ENCODE measurements at regions of chr3 and their contacts with region 1.

Region 1: GRCh38 chr3:58052373-58053273 is 44.4 kb downstream of the FLNB start:
- DNase-seq: peak; percentile 83
- ATAC-seq: peak; percentile 42
- H3K4me3 ChIP-seq: peak overlapping the region in 1 of 3 experiments; percentile 20; a peak in 1 of 6 replicates
- H3K27ac ChIP-seq: peak overlapping the region; percentile 96
- H3K4me1 ChIP-seq: peaks cover 96% of the 10 kb centered on the region
- H3K27me3 ChIP-seq: no peaks in the 10 kb centered on the region
- CTCF ChIP-seq: no peak
- EP300 ChIP-seq: peak in 1 of 2 experiments; percentile 64; a peak in 1 of 4 replicates
- POLR2A ChIP-seq: no peak
- RAD21 ChIP-seq: no peak

Region 2: GRCh38 chr3:58025837-58026569 is 26.6 kb before region 1 on chr3:
- CTCF ChIA-PET with region 1: no interaction called
- POLR2A ChIA-PET with region 1: interaction called, 13 read pairs
- in situ Hi-C with region 1: no loop called
- intact Hi-C with region 1: loop called (anchors 5 kb)
- DNase-seq: peak; percentile 39
- ATAC-seq: no peak; the same call in 2 of the 3 replicates
- H3K4me3 ChIP-seq: no peak overlapping the region
- H3K27ac ChIP-seq: peak overlapping the region; percentile 24
- H3K4me1 ChIP-seq: peaks cover 90% of the 10 kb centered on the region
- H3K27me3 ChIP-seq: no peaks in the 10 kb centered on the region
- CTCF ChIP-seq: no peak
- EP300 ChIP-seq: no peak
- POLR2A ChIP-seq: no peak
- RAD21 ChIP-seq: no peak

Region 3: GRCh38 chr3:58041654-58042324 is 10.8 kb before region 1 on chr3:
- CTCF ChIA-PET with region 1: no interaction called
- POLR2A ChIA-PET with region 1: interaction called, 46 read pairs
- in situ Hi-C with region 1: no loop called
- intact Hi-C with region 1: no loop called
- DNase-seq: peak; percentile 85
- ATAC-seq: peak; percentile 64
- H3K4me3 ChIP-seq: peak overlapping the region in 1 of 3 experiments; percentile 36; a peak in 2 of 6 replicates
- H3K27ac ChIP-seq: peak overlapping the region; percentile 88
- H3K4me1 ChIP-seq: peaks cover 86% of the 10 kb centered on the region
- H3K27me3 ChIP-seq: no peaks in the 10 kb centered on the region
- CTCF ChIP-seq: no peak
- EP300 ChIP-seq: peak in 1 of 2 experiments; percentile 71; a peak in 2 of 4 replicates
- POLR2A ChIP-seq: no peak
- RAD21 ChIP-seq: no peak

Region 4: DNA sequence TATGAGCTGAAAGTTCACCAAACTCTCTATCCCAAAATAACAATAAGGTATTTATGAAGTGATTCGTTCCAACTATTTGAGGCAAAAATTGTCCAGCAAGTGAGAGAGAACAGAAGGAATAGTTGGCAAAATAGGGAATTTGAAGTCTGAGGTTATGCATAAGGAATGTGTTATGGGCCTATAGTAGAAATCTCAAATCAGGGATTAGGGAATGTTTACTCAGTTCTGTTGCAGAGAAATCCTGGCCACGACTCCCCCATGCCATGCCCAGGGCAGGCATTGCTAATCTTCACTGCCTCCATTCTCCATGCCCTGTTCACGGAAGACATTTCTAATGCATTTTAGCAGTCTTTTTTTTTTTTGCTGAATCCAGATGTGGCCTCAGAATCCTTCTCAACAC is 14.2 kb after region 1 on chr3:
- CTCF ChIA-PET with region 1: no interaction called
- POLR2A ChIA-PET with region 1: interaction called, 86 read pairs
- in situ Hi-C with region 1: no loop called
- intact Hi-C with region 1: no loop called
- DNase-seq: peak; percentile 27
- ATAC-seq: no peak
- H3K4me3 ChIP-seq: no peak overlapping the region
- H3K27ac ChIP-seq: peak overlapping the region; percentile 77
- H3K4me1 ChIP-seq: peaks cover 96% of the 10 kb centered on the region
- H3K27me3 ChIP-seq: no peaks in the 10 kb centered on the region
- CTCF ChIP-seq: no peak
- EP300 ChIP-seq: no peak
- POLR2A ChIP-seq: no peak
- RAD21 ChIP-seq: no peak

Region 5: GRCh38 chr3:58135712-58136543 is 83.3 kb after region 1 on chr3:
- CTCF ChIA-PET with region 1: no interaction called
- POLR2A ChIA-PET with region 1: no interaction called
- in situ Hi-C with region 1: no loop called
- intact Hi-C with region 1: no loop called
- DNase-seq: no peak
- ATAC-seq: no peak
- H3K4me3 ChIP-seq: no peak overlapping the region
- H3K27ac ChIP-seq: no peak overlapping the region
- H3K4me1 ChIP-seq: no peaks in the 10 kb centered on the region
- H3K27me3 ChIP-seq: no peaks in the 10 kb centered on the region
- CTCF ChIP-seq: 0 out of 2 replicates have a peak, but pooled peaks have one; percentile 11
- EP300 ChIP-seq: no peak
- POLR2A ChIP-seq: no peak
- RAD21 ChIP-seq: no peak

Region 6: GRCh38 chr3:58349792-58350626 is 297.4 kb after region 1 on chr3:
- CTCF ChIA-PET with region 1: no interaction called
- POLR2A ChIA-PET with region 1: no interaction called
- in situ Hi-C with region 1: no loop called
- intact Hi-C with region 1: no loop called
- DNase-seq: no peak
- ATAC-seq: no peak
- H3K4me3 ChIP-seq: no peak overlapping the region
- H3K27ac ChIP-seq: no peak overlapping the region
- H3K4me1 ChIP-seq: peaks cover 7% of the 10 kb centered on the region
- H3K27me3 ChIP-seq: no peaks in the 10 kb centered on the region
- CTCF ChIP-seq: no peak
- EP300 ChIP-seq: no peak
- POLR2A ChIP-seq: no peak
- RAD21 ChIP-seq: no peak